ENCODE measurements at regions of chr4 and their contacts with region 1.

Region 1: DNA sequence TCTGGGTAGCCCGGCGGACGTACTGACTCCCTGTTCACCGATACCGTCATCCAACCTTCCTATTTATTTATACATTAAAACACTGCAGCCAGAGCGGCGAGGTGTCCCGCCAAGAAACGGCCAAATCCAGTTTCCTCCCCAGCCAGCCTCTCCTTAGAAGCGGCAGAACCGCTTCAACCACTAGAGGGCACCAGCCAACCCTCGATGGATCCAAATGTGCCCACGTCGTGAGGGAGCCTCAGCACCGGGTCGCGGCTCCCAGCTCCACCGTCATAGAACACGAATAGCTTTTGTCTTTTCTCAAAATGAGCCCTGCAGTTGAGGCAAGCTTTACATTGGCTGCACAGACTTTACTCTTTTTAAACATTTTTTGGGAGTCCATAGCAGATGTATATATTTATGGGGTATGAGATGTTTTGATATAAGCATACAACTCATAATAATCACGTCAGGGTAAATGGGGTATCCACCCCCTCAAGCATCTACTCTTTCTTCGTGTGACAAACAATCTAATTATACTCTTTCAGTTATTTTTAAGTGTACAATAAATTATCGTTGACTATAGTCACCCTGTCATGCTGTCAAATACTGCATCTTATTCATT is 13.0 kb upstream of the HELT start:
- DNase-seq: peak; percentile 91
- ATAC-seq: peak; percentile 83
- H3K4me3 Mint-ChIP-seq: peak overlapping the region; percentile 77
- H3K27ac Mint-ChIP-seq: no peak overlapping the region
- H3K4me1 Mint-ChIP-seq: peaks cover 18% of the 10 kb centered on the region
- H3K27me3 Mint-ChIP-seq: peaks cover 56% of the 10 kb centered on the region
- CTCF ChIP-seq: peak; percentile 82

Region 2: GRCh38 chr4:184745831-184746795 is 259.2 kb before region 1 on chr4:
- CTCF ChIA-PET with region 1: interaction called, 11 read pairs
- POLR2A ChIA-PET with region 1: no interaction called
- DNase-seq: peak; percentile 64
- ATAC-seq: peak; percentile 31; the same call in 1 of the 2 replicates
- H3K4me3 Mint-ChIP-seq: no peak overlapping the region
- H3K27ac Mint-ChIP-seq: 0 out of 2 replicates have a peak overlapping the region, but pooled peaks have one; percentile 9
- H3K4me1 Mint-ChIP-seq: peaks cover 41% of the 10 kb centered on the region
- H3K27me3 Mint-ChIP-seq: peaks cover 7% of the 10 kb centered on the region; the same call in 1 of the 2 replicates
- CTCF ChIP-seq: peak; percentile 57

Region 3: DNA sequence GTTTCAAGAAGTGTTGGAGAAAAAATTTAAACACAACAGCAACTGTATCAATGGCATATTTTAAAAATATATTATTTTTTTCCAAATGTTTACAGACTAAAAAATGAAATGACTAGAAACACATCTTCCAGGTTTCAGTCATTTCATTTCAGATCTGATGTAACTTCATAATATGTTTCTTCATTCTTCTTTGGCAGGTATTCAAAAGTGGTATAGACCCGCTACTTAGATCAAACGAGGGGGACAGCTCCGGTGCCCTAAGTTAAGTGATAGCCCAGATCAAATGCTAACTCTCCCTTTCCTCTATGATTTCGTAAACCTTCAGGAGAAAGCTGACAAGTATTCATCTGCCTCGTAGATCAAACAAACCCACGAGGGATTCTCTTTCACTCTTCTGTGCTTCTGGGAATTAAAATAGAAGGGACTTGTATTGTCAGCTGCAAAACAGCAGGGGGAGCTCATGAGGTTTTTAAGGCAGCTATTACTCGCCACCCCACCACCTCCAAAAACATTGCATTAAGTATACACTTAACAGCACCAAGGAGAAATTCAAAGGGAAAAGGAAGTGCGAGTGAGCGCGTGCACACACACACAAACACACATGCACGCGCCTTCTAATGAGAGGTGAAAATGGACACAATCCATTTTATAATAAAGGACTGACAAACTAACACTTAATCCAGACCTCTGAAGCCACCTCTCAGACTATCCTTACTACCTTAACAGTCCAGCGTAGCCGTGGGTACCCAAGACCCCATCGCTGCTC is 34.4 kb after region 1 on chr4:
- CTCF ChIA-PET with region 1: interaction called, 11 read pairs
- POLR2A ChIA-PET with region 1: no interaction called
- DNase-seq: no peak
- ATAC-seq: peak; percentile 84
- H3K4me3 Mint-ChIP-seq: no peak overlapping the region
- H3K27ac Mint-ChIP-seq: no peak overlapping the region
- H3K4me1 Mint-ChIP-seq: peaks cover 16% of the 10 kb centered on the region
- H3K27me3 Mint-ChIP-seq: peaks cover 8% of the 10 kb centered on the region
- CTCF ChIP-seq: peak; percentile 72

Region 4: GRCh38 chr4:185128272-185129119 is 123.2 kb after region 1 on chr4:
- CTCF ChIA-PET with region 1: interaction called, 13 read pairs
- POLR2A ChIA-PET with region 1: interaction called, 3 read pairs
- DNase-seq: peak; percentile 65
- ATAC-seq: peak; percentile 74
- H3K4me3 Mint-ChIP-seq: peak overlapping the region; percentile 73
- H3K27ac Mint-ChIP-seq: no peak overlapping the region; the same call in 1 of the 2 replicates
- H3K4me1 Mint-ChIP-seq: peaks cover 12% of the 10 kb centered on the region
- H3K27me3 Mint-ChIP-seq: peaks cover 35% of the 10 kb centered on the region
- CTCF ChIP-seq: no peak

Region 5: GRCh38 chr4:185323606-185324005 is 318.3 kb after region 1 on chr4:
- CTCF ChIA-PET with region 1: no interaction called
- POLR2A ChIA-PET with region 1: no interaction called
- DNase-seq: no peak
- ATAC-seq: no peak
- H3K4me3 Mint-ChIP-seq: no peak overlapping the region
- H3K27ac Mint-ChIP-seq: no peak overlapping the region
- H3K4me1 Mint-ChIP-seq: peaks cover 17% of the 10 kb centered on the region
- H3K27me3 Mint-ChIP-seq: no peaks in the 10 kb centered on the region; the same call in 1 of the 2 replicates
- CTCF ChIP-seq: no peak